Ovary (tissue), 10 donors: ENCODE measurements at regions of chr17 and their contacts with region 1.

Region 1: DNA sequence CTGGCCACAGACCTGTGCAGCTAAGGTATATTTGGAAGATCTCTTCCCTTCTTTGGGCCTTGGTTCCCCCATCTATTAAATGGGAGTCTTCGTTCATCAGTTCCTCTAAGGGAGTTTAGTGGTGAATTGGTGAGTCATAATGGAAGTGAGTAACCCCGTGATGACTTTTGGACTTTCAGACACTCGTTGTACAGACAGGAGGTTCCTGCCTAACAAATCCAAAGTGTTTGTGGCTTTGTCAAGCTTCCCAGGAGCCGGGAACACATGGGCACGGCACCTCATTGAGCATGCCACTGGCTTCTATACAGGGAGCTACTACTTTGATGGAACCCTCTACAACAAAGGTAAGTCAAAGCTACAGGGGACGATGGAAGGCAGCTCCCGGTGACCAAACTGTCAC is 40.4 kb downstream of the WSCD1 start:
- DNase-seq: no peak
- H3K4me3 ChIP-seq: no peak overlapping the region
- H3K27ac ChIP-seq: no peak overlapping the region
- H3K4me1 ChIP-seq: no peaks in the 10 kb centered on the region
- H3K27me3 ChIP-seq: no peaks in the 10 kb centered on the region
- CTCF ChIP-seq: no peak
- EP300 ChIP-seq: no peak
- POLR2A ChIP-seq: no peak

Region 2: GRCh38 chr17:6163612-6164333 is 53.2 kb after region 1 on chr17:
- intact Hi-C with region 1: loop called in 1 of 4 experiments (anchors 10 kb)
- DNase-seq: no peak
- H3K4me3 ChIP-seq: no peak overlapping the region
- H3K27ac ChIP-seq: no peak overlapping the region
- H3K4me1 ChIP-seq: no peaks in the 10 kb centered on the region
- H3K27me3 ChIP-seq: no peaks in the 10 kb centered on the region
- CTCF ChIP-seq: no peak
- EP300 ChIP-seq: no peak
- POLR2A ChIP-seq: no peak

Region 3: DNA sequence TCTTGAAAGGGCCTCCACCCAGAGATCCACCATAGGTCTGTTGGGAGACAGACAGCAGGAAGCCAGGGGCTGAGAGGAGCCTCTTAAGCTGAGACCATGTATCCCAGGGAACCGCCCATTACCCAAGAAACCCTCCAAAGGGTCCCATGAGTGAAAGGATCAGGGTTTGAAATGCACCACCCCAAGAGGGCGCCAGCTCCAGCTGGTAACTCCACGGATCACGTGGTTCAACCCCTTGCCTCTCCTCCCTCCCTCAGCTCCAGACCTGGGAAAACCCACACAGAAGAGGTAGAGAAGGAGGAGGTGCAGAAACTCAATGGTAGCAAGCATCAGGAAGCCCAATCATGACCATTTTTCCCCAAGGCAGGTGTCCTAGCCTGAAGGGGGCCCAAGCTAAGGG is 175.6 kb after region 1 on chr17:
- intact Hi-C with region 1: no loop called
- DNase-seq: no peak
- H3K4me3 ChIP-seq: no peak overlapping the region
- H3K27ac ChIP-seq: no peak overlapping the region
- H3K4me1 ChIP-seq: no peaks in the 10 kb centered on the region
- H3K27me3 ChIP-seq: no peaks in the 10 kb centered on the region
- CTCF ChIP-seq: no peak
- EP300 ChIP-seq: no peak
- POLR2A ChIP-seq: no peak